Adrenal gland (tissue), 19 donors: ENCODE measurements at regions of chr11 and their contacts with region 1.

Region 1: DNA sequence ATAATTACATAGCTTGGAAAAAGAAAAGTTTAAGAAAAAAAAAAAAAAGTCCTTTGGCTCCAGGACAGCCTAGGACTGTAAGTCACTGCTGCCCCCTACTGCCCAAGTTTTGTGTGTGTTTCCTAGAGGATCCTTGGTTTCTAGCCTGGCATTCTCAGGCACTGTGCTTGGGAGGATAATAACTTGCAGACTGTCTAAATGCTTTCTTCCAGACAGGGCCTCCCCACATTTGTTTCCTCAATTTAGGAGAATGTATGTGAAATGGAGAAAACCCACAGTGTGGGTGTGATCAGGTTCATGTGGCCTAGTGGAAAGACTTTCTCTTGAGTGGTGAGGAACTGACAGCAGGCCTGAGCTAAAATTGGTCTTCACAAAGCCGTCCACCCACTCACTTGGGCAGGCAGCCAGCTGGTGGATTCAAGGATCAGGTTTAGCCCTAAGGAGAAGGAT is 191.0 kb downstream of the NAV2 start:
- DNase-seq: peak; percentile 71 to 93 (median 83)
- H3K4me3 ChIP-seq: no peak overlapping the region
- H3K27ac ChIP-seq: no peak overlapping the region
- H3K4me1 ChIP-seq: peaks cover 0 to 9% of the 10 kb centered on the region in 2 donors
- H3K27me3 ChIP-seq: no peaks in the 10 kb centered on the region
- CTCF ChIP-seq: peak; percentile 64 to 80 (median 74)
- POLR2A ChIP-seq: no peak

Region 2: DNA sequence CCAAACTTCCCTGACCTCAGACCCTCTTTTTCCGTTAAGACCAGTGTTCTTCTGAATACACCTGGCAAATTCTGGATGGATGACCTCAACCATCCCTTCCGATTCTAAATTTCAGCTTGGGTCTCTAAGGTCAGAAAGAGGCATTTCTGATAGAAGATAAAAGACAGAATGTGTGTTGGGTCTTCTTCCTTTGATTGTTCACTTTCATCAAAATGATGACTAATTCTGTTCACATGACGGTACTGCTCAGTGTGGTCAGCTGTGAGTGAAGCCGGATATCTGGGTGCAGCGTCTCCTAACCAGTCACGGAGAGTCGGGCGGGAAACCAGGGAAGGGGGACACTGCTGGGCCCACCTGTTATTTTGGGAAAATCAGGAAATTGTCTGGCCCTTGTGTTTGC is 342.6 kb before region 1 on chr11:
- intact Hi-C with region 1: loop called (anchors 5 kb)
- DNase-seq: no peak
- H3K4me3 ChIP-seq: no peak overlapping the region
- H3K27ac ChIP-seq: no peak overlapping the region
- H3K4me1 ChIP-seq: no peaks in the 10 kb centered on the region
- H3K27me3 ChIP-seq: no peaks in the 10 kb centered on the region
- CTCF ChIP-seq: no peak
- POLR2A ChIP-seq: no peak

Region 3: GRCh38 chr11:19777377-19778102 is 126.1 kb before region 1 on chr11:
- intact Hi-C with region 1: no loop called
- DNase-seq: peak in 3 of 7 donors; percentile 15 to 23 (median 16)
- H3K4me3 ChIP-seq: peak overlapping the region in 1 of 4 donors; percentile 65
- H3K27ac ChIP-seq: no peak overlapping the region
- H3K4me1 ChIP-seq: peaks cover 0 to 5% of the 10 kb centered on the region in 2 donors
- H3K27me3 ChIP-seq: no peaks in the 10 kb centered on the region
- CTCF ChIP-seq: no peak
- POLR2A ChIP-seq: no peak

Region 4: DNA sequence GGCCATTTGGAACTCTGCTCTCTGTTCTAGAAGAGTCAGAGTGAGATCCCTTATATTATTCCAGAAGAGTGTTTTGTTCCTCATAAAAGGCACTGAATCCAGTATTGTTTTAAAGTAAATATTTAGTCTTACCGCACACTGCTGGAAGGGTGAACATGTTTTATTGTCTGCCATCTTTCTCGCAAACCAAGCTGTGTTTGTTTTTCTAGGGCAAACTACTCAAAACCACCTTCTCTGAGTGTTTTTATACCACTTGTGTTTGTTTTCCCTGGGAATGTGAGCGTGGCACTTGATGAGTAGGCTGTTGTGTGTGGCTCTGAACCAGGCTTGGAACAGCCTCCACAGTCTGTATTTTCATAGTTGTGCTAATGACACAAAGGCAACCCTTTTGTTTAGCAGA is 166.8 kb after region 1 on chr11:
- intact Hi-C with region 1: no loop called
- DNase-seq: no peak
- H3K4me3 ChIP-seq: no peak overlapping the region
- H3K27ac ChIP-seq: no peak overlapping the region
- H3K4me1 ChIP-seq: no peaks in the 10 kb centered on the region
- H3K27me3 ChIP-seq: no peaks in the 10 kb centered on the region
- CTCF ChIP-seq: no peak
- POLR2A ChIP-seq: no peak